Posterior cingulate gyrus (tissue), 11 donors: ENCODE measurements at regions of chr19 and their contacts with region 1.

Region 1: DNA sequence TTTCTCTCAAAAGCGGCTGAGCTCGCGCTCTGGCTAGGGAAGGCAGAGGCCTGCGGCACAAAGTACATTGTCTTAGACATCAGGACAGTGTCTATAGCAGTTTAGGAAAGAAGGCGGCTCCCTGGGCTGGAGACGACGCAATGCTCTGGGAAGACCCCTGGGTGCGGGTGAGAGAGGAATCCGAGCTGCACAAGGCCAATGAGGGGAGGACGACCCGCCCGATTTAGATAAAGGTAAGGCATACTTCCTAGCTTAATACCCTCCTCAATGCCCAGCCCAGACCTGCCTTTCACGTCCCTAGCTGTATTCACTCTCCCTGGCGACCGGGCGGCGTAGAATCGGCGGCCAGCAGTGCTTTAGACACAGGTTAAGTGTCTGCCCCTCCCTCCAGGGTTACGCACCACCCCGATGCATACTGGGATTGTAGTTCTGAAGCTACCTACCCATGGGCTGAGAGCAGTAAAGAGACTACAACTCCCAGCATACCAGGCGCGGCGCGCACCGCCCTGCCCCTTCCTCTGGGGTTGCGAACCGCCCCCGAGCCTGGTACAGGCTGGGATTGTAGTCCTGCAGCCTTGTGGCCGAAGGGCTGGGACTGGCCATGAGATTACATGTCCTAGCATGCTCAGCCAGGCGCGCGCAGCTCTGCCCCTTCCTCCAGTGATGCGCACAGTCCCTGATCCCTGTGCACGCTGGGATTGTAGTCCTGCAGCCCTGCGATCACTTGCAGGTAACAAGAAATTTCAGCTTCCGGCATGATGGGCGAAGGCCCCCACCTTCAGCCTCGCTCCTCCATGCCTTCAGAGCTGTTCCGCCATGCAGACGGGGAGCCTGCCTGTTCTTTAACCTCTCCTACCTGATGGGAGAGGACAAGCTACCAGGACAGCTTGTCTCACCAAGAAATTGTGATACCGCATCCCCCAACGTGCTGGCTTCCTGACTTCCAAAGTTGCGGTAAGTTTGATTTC is 43.4 kb upstream of the ZNF14 start:
- DNase-seq: peak; percentile 98 to 100 (median 100)

Region 2: DNA sequence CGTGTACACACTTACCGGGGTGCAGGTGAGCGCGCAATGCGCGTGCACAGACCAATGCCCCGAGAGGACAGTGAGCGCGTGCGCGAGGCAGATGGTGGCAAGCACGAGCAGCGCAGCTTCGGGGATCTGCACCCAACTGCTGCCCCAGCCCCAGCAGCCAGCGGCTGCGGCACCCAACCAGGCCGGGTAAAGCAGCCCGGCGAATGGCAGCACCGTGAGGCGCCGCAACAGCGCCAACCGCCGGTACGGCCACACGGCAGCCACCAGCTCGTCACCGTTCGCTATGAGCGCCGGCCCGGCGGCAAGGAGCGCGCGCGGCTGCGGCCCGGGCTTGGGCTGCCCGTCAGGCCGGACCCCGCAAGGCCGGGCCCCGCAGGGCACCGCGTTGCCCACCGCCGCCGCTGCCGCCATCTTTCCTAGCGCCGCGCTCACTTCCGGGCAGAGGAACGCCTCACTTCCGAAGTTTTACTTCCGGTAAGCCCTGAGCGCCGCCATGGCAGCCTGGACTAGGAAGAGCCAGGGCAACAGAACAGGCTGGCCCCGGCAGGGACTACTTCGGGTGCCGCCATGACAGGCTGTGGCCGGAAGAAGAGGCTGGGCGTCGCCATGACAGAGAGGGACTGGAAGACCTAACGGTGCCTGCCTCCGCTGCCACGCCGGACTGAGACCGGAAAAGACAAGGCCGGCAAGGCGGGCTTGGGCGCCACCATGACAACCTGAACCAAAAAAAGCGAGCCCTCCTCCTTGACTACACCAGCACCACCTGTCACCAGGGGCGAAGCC is 112.9 kb before region 1 on chr19 and contains the start of gene ATP13A1:
- intact Hi-C with region 1: loop called (anchors 5 kb)
- DNase-seq: peak; percentile 93 to 99 (median 96)

Region 3: DNA sequence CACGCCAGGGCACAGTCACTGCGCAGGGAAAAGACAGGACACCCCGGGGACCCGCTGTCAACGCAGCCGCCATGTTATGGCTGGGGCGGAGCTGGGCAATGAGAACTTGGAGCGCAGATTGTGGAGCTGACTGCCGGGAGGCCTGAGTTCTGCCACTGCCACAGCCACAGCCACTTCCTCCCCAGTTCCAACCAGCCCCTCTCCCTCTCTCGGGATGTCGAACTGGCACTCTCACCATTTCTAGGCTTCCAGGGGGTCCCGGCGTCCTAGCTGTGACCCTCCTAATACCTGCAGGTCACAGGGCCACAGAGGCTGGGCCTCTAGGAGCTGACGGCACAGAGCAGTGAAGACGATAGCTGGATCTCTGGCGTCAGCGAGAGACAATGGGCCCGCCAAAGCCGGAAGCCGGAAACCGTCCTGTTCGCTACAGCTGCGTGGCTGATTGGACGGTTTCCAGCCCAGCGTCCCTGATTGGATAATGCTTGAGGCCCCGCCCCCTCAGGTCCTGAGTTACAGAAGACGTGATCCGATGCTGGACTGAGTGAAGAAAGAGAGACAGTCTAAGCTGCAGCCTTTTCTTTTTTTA is 45.1 kb after region 1 on chr19 and contains the start of gene ZNF506:
- intact Hi-C with region 1: loop called (anchors 5 kb)
- DNase-seq: peak; percentile 94 to 99 (median 98)